Activated T-helper 1 cell treated with anti-CD3 and anti-CD28 coated beads, Interleukin-12 subunit alpha, Interleukin-12 subunit beta, Interleukin-2, Interleukin-4 antibody, amounts not matched to agents 30 ng/mL and 10 ng/mL and 1 ng/mL, durations not matched to agents 14 hours and 24 hours and 36 hours (primary cell): ENCODE measurements at regions of chr6 and their contacts with region 1.

Region 1: DNA sequence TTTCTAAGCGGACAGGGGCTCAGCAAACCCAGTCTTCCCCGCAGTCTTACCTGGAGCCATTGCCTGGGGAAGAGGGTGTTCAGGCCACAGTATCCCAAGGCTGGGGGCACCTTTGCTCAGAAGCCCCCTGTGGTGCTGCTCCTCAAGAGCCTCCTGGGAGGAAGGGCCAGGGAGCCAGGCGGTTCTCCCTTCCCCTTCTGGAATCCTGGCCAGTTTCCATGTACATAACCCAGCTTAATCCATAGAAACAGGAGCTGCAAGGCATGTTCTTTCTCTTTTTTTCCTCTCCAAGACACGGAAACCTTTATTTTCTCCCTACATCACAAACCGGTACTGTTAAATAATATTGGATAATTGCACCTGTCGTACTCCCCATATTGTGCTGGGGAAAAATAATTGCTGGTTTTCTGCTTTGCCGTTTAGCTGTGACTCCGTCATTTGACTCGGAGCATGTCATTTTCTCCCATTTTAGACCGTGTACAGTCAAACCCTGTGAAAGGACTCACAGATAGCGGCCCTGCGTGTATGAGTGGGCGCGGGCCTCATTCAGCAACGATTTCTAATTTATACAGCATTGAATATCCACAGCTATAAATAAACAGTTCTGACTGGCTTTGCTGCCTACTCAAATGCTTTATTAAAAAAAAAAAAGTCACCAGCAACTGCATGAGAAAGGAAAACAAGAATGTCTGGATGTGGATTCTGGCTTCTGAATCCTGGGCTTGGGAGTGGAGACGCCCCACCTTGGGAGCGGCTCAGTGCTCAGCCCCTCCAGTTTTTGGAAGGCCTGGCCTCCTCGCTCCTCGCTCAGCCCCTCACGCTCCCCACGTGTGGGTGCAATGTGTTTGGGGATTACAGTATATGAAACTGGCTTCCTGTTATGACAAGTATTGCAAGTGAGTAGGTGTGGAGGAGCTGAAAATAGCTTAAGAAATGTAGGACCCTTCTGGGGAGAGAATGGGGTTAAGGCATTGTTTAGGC is 67.3 kb downstream of the ADTRP start:
- DNase-seq: peak; percentile 30
- H3K4me3 Mint-ChIP-seq: peak overlapping the region; percentile 76
- H3K27ac Mint-ChIP-seq: peak overlapping the region; percentile 97
- H3K4me1 Mint-ChIP-seq: peaks cover 73% of the 10 kb centered on the region
- H3K27me3 Mint-ChIP-seq: no peaks in the 10 kb centered on the region

Region 2: GRCh38 chr6:11232193-11232769 is 479.0 kb before region 1 on chr6 and contains the start of gene NEDD9:
- intact Hi-C with region 1: loop called (anchors 5 kb)
- DNase-seq: peak; percentile 93
- H3K4me3 Mint-ChIP-seq: peak within 1 kb of the TSS; percentile 98
- H3K27ac Mint-ChIP-seq: peak within 1 kb of the TSS; percentile 96
- H3K4me1 Mint-ChIP-seq: peaks cover 86% of the 10 kb centered on the region
- H3K27me3 Mint-ChIP-seq: no peaks in the 10 kb centered on the region
- total RNA-seq, gene NEDD9: 53.2 and 62.1 TPM in 2 replicates

Region 3: DNA sequence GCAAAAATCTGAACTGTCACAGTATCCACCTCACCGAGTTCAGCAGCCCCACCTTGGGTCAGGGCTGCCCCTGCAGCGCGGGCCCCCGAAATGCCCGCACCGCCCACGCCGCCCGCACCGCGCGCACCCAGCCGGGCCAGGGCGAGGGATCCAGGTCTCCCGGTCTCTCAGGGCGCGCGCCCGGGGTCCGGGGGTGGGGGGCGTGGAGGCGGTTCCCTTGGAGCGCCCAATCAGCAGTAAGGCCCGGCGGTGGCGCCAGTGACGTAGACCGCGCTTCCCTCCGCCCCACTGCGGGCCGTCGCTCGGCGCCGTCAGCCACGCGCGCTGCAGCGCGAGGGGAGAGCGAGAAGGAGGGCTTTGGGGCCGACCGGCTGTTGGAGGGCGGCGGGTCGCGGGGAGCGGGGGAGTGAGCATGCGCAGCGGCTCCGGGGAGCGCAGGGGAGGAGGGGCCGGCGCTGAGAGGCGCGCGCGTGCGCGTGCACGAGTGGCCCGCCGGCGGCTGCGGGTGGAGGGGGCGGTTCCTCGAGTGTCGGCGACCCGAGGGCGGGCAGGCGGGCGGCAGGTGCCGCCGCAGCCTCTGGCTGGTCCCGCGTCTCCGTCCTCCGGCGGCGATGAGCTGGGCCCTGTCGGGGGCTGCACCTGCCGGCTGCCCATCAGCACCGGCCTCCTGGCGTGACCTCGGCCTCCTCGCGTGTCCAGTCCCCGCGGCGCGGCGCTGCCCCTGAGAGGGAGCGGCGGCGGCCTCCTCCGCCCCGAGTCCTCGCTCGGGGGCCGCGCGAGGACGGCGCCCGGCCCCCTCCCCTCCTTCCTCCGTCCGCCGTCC is 173.9 kb before region 1 on chr6 and contains the start of gene TMEM170B:
- intact Hi-C with region 1: loop called (anchors 5 kb)
- DNase-seq: peak; percentile 90
- H3K4me3 Mint-ChIP-seq: peak within 1 kb of the TSS; percentile 84
- H3K27ac Mint-ChIP-seq: peak within 1 kb of the TSS; percentile 68
- H3K4me1 Mint-ChIP-seq: peaks cover 17% of the 10 kb centered on the region
- H3K27me3 Mint-ChIP-seq: peaks cover 62% of the 10 kb centered on the region
- total RNA-seq, gene TMEM170B: 0.78 and 0.86 TPM in 2 replicates

Region 4: GRCh38 chr6:11732036-11732631 is 20.8 kb after region 1 on chr6:
- intact Hi-C with region 1: loop called (anchors 1 kb)
- DNase-seq: peak; percentile 25
- H3K4me3 Mint-ChIP-seq: peak overlapping the region; percentile 23
- H3K27ac Mint-ChIP-seq: peak overlapping the region; percentile 87
- H3K4me1 Mint-ChIP-seq: peaks cover 71% of the 10 kb centered on the region
- H3K27me3 Mint-ChIP-seq: no peaks in the 10 kb centered on the region

Region 5: GRCh38 chr6:11824986-11825385 is 113.7 kb after region 1 on chr6:
- intact Hi-C with region 1: loop called (anchors 1 kb)
- DNase-seq: peak; percentile 16
- H3K4me3 Mint-ChIP-seq: no peak overlapping the region
- H3K27ac Mint-ChIP-seq: peak overlapping the region; percentile 79
- H3K4me1 Mint-ChIP-seq: peaks cover 25% of the 10 kb centered on the region
- H3K27me3 Mint-ChIP-seq: peaks cover 1% of the 10 kb centered on the region

Region 6: DNA sequence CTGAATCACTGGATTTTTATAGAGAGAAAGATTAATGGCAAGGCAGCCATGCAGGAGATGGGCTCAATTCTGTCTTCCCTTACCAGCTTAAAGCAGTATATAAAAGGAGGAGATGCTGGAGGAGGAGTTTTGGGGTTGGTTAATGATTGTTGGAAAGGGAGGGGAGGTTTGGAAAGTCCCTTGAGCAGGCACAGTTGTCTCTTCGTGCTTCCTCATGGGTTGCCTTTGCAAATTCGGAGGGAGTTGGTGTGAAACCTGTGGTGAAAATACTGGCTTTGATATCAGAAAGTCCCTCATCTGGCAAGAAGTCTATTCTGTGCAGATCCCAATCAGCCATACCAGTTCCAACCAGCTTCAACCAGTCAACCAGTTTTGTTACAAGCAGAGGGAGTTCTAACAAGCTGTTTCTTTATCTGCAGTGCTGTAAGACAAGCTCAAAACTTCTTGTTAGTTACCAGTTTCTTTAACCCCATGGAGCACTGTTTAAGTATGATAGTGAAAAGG is 407.8 kb after region 1 on chr6:
- intact Hi-C with region 1: loop called (anchors 1 kb)
- DNase-seq: peak; percentile 77
- H3K4me3 Mint-ChIP-seq: peak overlapping the region; percentile 36
- H3K27ac Mint-ChIP-seq: peak overlapping the region; percentile 83
- H3K4me1 Mint-ChIP-seq: peaks cover 67% of the 10 kb centered on the region
- H3K27me3 Mint-ChIP-seq: no peaks in the 10 kb centered on the region